Head of caudate nucleus (tissue), 42 donors: ENCODE measurements at regions of chr2 and their contacts with region 1.

Region 1: GRCh38 chr2:164560181-164560792 is 61.0 kb downstream of the GRB14 start:
- DNase-seq: peak in 1 of 42 donors; percentile 22

Region 2: GRCh38 chr2:164717000-164717803 is 156.9 kb after region 1 on chr2:
- intact Hi-C with region 1: loop called (anchors 5 kb)
- DNase-seq: peak in 2 of 42 donors; percentile 5 to 13